Activated T-helper 1 cell treated with anti-CD3 and anti-CD28 coated beads, Interleukin-12 subunit alpha, Interleukin-12 subunit beta, Interleukin-2, Interleukin-4 antibody, amounts not matched to agents 30 ng/mL and 10 ng/mL and 1 ng/mL, durations not matched to agents 14 hours and 24 hours and 36 hours (primary cell): ENCODE measurements at regions of chr3 and their contacts with region 1.

Region 1: GRCh38 chr3:29153811-29154210 is 127.1 kb upstream of the RBMS3 start:
- DNase-seq: peak; percentile 62
- H3K4me3 Mint-ChIP-seq: no peak overlapping the region
- H3K27ac Mint-ChIP-seq: no peak overlapping the region
- H3K4me1 Mint-ChIP-seq: peaks cover 13% of the 10 kb centered on the region
- H3K27me3 Mint-ChIP-seq: peaks cover 15% of the 10 kb centered on the region

Region 2: DNA sequence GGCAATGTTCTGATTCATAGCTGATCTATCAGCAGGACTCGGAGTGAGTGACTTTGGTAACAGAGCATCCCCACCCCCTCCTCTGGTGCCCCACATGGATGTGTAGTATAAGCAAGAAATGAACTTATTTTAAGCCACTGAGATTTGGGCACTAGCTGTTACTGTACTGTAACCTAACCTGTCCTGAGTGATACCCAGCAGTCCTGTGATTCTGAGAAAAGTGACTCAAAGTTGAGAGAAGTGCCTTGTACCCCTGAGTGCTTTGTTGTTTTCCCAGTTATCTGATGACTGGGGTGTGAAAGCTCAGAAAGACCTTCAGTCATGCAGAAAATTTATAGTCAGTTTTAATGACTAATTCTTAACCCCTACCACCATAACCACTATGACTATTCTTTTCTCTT is 312.8 kb before region 1 on chr3:
- intact Hi-C with region 1: loop called (anchors 5 kb)
- DNase-seq: peak; percentile 1
- H3K4me3 Mint-ChIP-seq: no peak overlapping the region
- H3K27ac Mint-ChIP-seq: peak overlapping the region; percentile 56
- H3K4me1 Mint-ChIP-seq: peaks cover 28% of the 10 kb centered on the region
- H3K27me3 Mint-ChIP-seq: no peaks in the 10 kb centered on the region

Region 3: DNA sequence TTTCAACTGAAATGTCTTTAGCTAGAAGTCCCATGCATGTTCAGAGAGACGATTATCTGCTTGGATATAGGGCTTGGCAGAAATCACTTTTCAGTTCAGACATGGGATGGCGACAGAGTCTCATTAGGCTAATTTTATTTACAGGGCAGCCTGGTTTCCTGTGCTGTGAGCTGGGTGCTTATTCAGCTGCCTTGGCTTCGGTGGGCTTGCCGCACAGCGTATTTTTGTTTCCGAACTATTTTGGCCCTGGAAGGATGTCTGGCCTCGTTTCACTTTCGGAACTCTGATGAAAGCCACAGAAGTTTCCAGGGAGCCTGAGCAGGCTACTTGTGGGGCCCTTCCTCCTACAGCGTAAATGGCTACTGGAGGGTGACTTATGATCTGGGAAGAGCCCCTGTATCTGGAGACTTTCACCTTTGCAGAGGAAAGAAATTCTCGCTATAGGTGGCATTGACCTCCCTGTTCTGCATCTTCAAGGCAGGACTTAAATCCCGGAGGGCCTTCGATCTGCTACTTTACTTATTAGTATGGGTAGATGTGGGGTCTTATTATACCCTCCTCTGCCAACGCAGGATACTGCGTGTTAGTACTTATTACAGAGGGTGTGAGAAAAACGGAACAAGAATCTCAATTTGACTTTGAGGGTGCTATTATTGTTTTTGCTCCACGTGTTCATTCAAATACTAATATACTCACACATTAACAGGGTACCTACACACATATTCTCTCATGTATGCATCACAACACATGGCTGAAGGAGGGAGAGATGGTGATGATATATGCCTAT is 236.9 kb before region 1 on chr3:
- intact Hi-C with region 1: loop called (anchors 5 kb)
- DNase-seq: peak; percentile 9
- H3K4me3 Mint-ChIP-seq: no peak overlapping the region
- H3K27ac Mint-ChIP-seq: no peak overlapping the region
- H3K4me1 Mint-ChIP-seq: peaks cover 31% of the 10 kb centered on the region
- H3K27me3 Mint-ChIP-seq: peaks cover 10% of the 10 kb centered on the region

Region 4: DNA sequence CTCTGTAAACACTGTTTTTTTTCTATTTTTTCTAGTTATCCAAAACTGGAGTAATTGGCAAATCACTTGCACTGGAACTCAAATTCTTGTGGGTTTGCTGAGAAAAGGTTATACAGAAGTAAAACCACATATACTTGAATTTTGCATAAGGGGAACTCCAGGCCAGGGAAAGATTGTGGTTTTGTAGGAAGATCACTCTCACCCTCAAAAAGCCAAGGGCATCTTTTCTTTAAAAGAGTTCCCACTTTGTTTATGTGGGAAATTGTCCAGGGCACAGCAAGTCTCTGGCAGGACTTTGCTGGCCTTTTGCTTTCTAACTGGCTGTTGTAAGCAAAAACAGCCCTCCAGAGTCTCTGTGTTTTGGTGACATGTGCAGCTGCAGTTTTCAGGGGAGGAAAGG is 213.3 kb before region 1 on chr3:
- intact Hi-C with region 1: loop called (anchors 2 kb)
- DNase-seq: no peak
- H3K4me3 Mint-ChIP-seq: peak overlapping the region; percentile 32
- H3K27ac Mint-ChIP-seq: peak overlapping the region; percentile 37
- H3K4me1 Mint-ChIP-seq: peaks cover 38% of the 10 kb centered on the region
- H3K27me3 Mint-ChIP-seq: peaks cover 17% of the 10 kb centered on the region

Region 5: DNA sequence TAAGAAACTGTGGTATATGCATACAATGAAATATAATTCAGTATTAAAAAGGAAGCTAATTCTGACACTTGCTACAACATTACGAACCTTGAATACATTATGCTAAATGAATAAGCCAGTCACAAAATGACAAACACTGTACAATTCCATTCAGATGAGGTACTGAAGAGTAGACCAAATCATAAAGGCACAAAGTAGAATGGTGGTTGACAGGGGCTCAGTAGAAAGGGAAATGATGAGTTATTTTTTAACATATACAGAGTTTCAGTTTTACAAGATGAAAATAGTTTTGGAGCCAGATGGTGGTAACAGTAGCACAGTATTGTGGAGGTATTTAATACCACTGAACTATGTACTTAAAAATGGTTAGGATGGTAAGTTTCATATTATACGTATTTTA is 127.5 kb before region 1 on chr3:
- intact Hi-C with region 1: loop called (anchors 5 kb)
- DNase-seq: no peak
- H3K4me3 Mint-ChIP-seq: no peak overlapping the region
- H3K27ac Mint-ChIP-seq: peak overlapping the region; percentile 7
- H3K4me1 Mint-ChIP-seq: peaks cover 10% of the 10 kb centered on the region
- H3K27me3 Mint-ChIP-seq: no peaks in the 10 kb centered on the region

Region 6: DNA sequence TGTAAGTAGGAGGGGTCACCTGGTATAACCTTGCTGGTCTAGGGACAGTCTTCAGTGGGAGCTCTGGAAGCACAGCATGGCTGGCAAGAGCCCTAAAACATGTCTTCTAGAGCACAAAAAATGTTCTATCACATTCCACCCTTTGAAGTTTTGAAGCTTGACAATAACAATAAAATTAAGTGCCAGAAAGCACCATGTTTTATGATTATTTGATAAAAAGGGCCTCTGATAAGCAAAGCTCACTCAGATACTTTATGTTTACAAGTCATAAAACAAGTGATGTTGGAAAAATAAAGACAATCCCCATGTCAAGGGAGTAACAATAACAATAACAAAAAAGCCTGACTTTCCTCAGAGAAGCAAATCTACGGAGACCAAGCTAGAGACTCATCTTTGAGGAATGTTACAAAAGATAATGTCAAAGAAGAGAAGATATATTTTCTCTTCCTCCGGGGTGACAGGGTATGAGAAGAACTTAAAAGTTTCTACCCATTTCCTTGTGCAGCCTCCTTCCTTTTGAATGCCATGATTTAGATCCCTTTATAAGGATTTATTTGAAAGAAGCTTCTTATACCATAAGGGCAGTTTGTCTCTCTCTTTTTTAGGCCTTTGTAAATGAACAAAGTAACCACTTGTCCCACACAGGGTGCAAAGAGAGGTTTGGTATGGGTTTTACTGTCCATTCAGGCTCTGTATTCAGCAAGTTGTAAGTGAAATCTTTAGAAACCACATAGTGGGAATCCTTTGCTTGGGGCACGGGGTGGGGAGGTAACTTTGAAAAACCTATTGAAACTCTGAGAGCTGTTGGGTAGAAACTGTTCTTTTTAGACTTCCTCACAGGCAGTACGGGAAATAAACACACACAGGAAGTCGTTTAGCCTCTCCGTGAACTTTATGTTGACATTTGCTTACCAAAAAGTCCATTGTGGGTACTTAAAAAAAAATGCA is 17.5 kb after region 1 on chr3:
- intact Hi-C with region 1: loop called (anchors 2 kb)
- DNase-seq: peak; percentile 12
- H3K4me3 Mint-ChIP-seq: peak overlapping the region; percentile 7
- H3K27ac Mint-ChIP-seq: peak overlapping the region; percentile 69
- H3K4me1 Mint-ChIP-seq: peaks cover 23% of the 10 kb centered on the region
- H3K27me3 Mint-ChIP-seq: no peaks in the 10 kb centered on the region

Region 7: GRCh38 chr3:29186982-29187725 is 33.3 kb after region 1 on chr3:
- intact Hi-C with region 1: loop called (anchors 1 kb)
- DNase-seq: no peak
- H3K4me3 Mint-ChIP-seq: no peak overlapping the region
- H3K27ac Mint-ChIP-seq: peak overlapping the region; percentile 8
- H3K4me1 Mint-ChIP-seq: peaks cover 36% of the 10 kb centered on the region
- H3K27me3 Mint-ChIP-seq: no peaks in the 10 kb centered on the region

Region 8: DNA sequence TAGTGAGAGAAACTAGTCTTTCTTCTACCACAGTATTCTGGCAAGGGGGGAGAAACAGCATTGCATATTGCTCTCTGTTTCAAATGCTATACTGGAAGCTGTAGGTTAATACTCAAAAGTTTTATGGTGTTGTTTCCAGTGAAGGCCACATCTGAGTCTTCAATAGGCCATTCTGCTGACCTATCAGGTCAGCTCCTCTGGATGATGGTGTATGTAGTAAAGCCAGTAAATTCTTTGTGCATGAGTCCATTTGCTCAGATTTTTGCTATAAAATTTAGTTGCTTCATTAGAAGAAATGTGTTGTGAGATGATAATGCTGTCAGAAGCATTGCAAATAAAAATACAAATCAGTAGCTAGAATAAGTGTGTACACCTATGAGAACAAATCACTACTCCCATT is 62.1 kb after region 1 on chr3:
- intact Hi-C with region 1: no loop called
- DNase-seq: no peak
- H3K4me3 Mint-ChIP-seq: no peak overlapping the region
- H3K27ac Mint-ChIP-seq: no peak overlapping the region
- H3K4me1 Mint-ChIP-seq: peaks cover 8% of the 10 kb centered on the region
- H3K27me3 Mint-ChIP-seq: peaks cover 1% of the 10 kb centered on the region